Sigmoid colon (tissue), 7 donors: ENCODE measurements at regions of chr5 and their contacts with region 1.

Region 1: DNA sequence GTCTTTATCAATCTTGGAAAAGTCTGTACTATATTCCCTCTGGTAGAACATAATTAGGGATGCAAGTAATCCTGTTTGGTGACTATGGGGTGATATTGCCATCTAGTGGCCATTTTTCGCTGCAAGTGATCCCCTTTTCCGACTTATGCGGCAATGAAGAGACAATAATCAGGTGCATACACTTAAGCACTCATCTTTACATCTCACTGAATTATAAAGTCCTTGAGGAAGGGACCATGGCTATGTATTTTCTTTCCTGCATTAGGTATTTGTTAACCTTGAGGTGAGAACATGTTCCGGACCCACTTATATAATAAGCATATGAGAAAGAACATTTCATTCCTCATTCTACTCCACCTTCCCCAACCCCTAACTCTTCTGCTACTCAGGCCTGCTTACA is 19.6 kb upstream of the LIX1 start:
- DNase-seq: peak; percentile 76
- H3K4me3 ChIP-seq: no peak overlapping the region
- H3K27ac ChIP-seq: no peak overlapping the region
- H3K4me1 ChIP-seq: no peaks in the 10 kb centered on the region
- H3K27me3 ChIP-seq: no peaks in the 10 kb centered on the region
- CTCF ChIP-seq: peak; percentile 78 to 91 (median 81)
- EP300 ChIP-seq: no peak
- POLR2A ChIP-seq: no peak

Region 2: GRCh38 chr5:96868603-96869371 is 293.3 kb before region 1 on chr5:
- intact Hi-C with region 1: loop called (anchors 2 kb)
- DNase-seq: no peak
- H3K4me3 ChIP-seq: no peak overlapping the region
- H3K27ac ChIP-seq: no peak overlapping the region
- H3K4me1 ChIP-seq: no peaks in the 10 kb centered on the region
- H3K27me3 ChIP-seq: no peaks in the 10 kb centered on the region
- CTCF ChIP-seq: peak; percentile 65 to 95 (median 88)
- EP300 ChIP-seq: no peak
- POLR2A ChIP-seq: no peak

Region 3: DNA sequence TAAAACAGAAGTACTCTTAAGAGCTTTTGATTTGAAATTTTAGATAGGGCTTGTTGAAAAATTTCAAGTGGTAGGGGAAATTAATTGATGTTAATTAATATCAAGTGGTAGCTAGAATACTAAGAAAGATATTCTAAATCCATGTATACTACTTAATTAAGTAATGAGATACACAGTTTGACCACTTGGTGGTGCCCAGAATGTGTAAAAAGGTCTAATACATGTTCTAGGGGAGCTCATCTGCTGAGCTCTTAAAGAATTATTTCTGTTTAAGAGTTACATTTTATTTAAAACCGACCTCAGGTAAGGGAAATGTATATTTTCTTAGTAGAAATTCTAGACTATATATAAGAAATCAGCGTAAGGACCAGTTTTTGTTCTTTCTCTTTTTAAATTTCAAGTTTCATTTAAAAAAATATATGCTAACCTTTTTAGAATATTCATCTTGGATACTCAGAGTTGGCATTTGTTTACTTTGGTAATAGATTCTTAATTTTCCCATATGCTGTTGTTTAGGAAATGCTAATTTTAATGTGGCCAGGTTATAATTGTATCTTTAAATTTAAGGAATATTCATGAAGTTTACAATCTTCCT is 164.7 kb before region 1 on chr5:
- intact Hi-C with region 1: loop called (anchors 5 kb)
- DNase-seq: no peak
- H3K4me3 ChIP-seq: no peak overlapping the region
- H3K27ac ChIP-seq: no peak overlapping the region
- H3K4me1 ChIP-seq: no peaks in the 10 kb centered on the region
- H3K27me3 ChIP-seq: no peaks in the 10 kb centered on the region
- CTCF ChIP-seq: peak; percentile 10 to 51 (median 34)
- EP300 ChIP-seq: no peak
- POLR2A ChIP-seq: no peak

Region 4: DNA sequence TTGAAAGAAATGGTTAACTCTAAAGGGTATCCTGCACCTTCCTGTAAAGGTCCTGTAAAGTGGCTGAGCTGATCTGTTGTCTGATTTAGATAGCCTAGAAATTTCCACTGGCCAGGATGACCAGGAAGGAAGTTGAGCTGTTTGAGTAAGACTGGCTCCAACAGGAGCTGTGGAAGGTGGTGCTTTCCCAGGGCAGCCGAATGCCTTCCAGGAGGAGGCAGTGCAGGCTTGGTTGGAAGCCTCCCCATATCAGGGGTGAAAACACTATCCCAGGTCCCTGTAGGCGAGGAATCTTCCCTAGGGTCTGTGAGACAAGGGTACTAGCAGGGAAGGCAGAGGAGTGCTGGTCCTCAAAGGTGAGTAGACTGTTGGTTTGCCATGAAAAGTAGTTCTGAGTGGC is 118.0 kb before region 1 on chr5:
- intact Hi-C with region 1: loop called (anchors 5 kb)
- DNase-seq: peak; percentile 62
- H3K4me3 ChIP-seq: no peak overlapping the region
- H3K27ac ChIP-seq: no peak overlapping the region
- H3K4me1 ChIP-seq: peaks cover 0 to 3% (median 0%) of the 10 kb centered on the region in 4 donors
- H3K27me3 ChIP-seq: no peaks in the 10 kb centered on the region
- CTCF ChIP-seq: peak in 3 of 4 experiments; percentile 29 to 44 (median 30)
- EP300 ChIP-seq: no peak
- POLR2A ChIP-seq: no peak